AG04449 (cell line): ENCODE measurements at regions of chr1 and their contacts with region 1.

Region 1: GRCh38 chr1:214213136-214213535 is 67.8 kb upstream of the SMYD2 start:
- DNase-seq: no peak
- H3K4me3 ChIP-seq: no peak overlapping the region
- CTCF ChIP-seq: no peak

Region 2: GRCh38 chr1:213844632-213845031 is 368.5 kb before region 1 on chr1:
- CTCF ChIA-PET with region 1: no interaction called
- POLR2A ChIA-PET with region 1: no interaction called
- DNase-seq: no peak
- H3K4me3 ChIP-seq: no peak overlapping the region
- CTCF ChIP-seq: no peak

Region 3: GRCh38 chr1:214071469-214071868 is 141.7 kb before region 1 on chr1:
- CTCF ChIA-PET with region 1: no interaction called
- POLR2A ChIA-PET with region 1: no interaction called
- DNase-seq: no peak
- H3K4me3 ChIP-seq: no peak overlapping the region
- CTCF ChIP-seq: no peak

Region 4: GRCh38 chr1:214224611-214225354 is 11.6 kb after region 1 on chr1:
- CTCF ChIA-PET with region 1: interaction called, 18 read pairs
- POLR2A ChIA-PET with region 1: no interaction called
- DNase-seq: no peak
- H3K4me3 ChIP-seq: peak overlapping the region; percentile 48
- CTCF ChIP-seq: no peak

Region 5: GRCh38 chr1:214241060-214241459 is 27.9 kb after region 1 on chr1:
- CTCF ChIA-PET with region 1: interaction called, 10 read pairs
- POLR2A ChIA-PET with region 1: no interaction called
- DNase-seq: no peak
- H3K4me3 ChIP-seq: no peak overlapping the region
- CTCF ChIP-seq: no peak

Region 6: DNA sequence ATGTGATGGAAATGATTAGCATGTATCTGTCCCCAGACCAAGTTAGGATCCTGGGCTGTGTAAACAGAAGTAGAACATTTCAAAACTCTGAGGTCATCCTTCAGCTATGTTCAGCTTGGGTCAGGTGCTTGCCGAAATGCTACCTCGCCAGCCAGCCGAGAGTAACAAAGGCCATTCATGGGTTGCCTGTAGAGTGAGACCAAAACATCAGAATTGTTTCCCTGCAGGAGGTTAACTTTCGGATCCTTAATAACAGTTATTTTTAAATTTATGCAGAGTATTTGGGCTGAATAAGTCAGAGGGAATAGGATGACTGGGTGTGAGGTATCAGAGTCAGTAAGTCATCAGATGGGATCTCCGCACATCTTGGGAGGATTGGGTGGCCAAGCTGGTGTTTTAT is 103.5 kb after region 1 on chr1:
- CTCF ChIA-PET with region 1: interaction called, 27 read pairs
- POLR2A ChIA-PET with region 1: no interaction called
- DNase-seq: no peak
- H3K4me3 ChIP-seq: no peak overlapping the region
- CTCF ChIP-seq: no peak

Region 7: GRCh38 chr1:214321705-214322453 is 108.7 kb after region 1 on chr1:
- CTCF ChIA-PET with region 1: interaction called, 584 read pairs
- POLR2A ChIA-PET with region 1: no interaction called
- DNase-seq: no peak
- H3K4me3 ChIP-seq: no peak overlapping the region
- CTCF ChIP-seq: no peak